OCI-LY7 (cell line): ENCODE measurements at regions of chr22 and their contacts with region 1.

Region 1: DNA sequence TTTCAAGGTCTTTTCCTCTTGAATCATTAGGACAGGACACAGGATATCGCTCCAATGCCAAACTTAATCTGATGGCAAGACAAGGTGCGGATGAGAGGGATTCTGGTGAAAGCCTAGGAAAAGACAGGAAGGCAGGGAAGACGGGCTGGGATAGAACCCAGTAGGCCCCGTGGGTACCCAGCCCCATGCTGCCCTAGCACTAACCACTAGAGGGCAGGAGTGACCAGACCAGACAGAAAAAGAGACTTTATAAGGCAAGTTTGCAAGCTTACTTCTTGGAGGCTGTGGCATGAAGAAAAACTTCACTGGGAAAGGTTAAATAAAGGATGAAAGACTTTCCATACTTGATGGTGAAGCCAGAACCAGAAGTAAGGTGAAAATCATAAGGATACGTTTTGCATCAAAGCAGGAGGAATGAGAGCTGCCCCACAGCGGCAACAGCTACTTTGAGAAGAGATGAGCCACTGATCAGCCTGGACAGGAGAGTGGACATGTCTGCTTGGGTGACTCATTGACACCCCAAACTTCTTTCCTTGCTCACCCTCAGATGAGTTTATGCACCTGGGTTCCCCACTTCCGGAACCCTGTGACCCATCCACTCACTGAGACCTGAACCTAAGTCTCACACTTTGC is 39.8 kb downstream of the SYN3 start:
- DNase-seq: peak; percentile 71
- H3K4me3 ChIP-seq: no peak overlapping the region
- H3K27ac ChIP-seq: no peak overlapping the region
- H3K4me1 ChIP-seq: peaks cover 18% of the 10 kb centered on the region
- CTCF ChIP-seq: peak; percentile 98

Region 2: GRCh38 chr22:32897400-32897799 is 120.9 kb before region 1 on chr22:
- CTCF ChIA-PET with region 1: no interaction called
- POLR2A ChIA-PET with region 1: no interaction called
- intact Hi-C with region 1: no loop called
- DNase-seq: no peak
- H3K4me3 ChIP-seq: no peak overlapping the region
- H3K27ac ChIP-seq: no peak overlapping the region
- H3K4me1 ChIP-seq: no peaks in the 10 kb centered on the region
- CTCF ChIP-seq: no peak

Region 3: DNA sequence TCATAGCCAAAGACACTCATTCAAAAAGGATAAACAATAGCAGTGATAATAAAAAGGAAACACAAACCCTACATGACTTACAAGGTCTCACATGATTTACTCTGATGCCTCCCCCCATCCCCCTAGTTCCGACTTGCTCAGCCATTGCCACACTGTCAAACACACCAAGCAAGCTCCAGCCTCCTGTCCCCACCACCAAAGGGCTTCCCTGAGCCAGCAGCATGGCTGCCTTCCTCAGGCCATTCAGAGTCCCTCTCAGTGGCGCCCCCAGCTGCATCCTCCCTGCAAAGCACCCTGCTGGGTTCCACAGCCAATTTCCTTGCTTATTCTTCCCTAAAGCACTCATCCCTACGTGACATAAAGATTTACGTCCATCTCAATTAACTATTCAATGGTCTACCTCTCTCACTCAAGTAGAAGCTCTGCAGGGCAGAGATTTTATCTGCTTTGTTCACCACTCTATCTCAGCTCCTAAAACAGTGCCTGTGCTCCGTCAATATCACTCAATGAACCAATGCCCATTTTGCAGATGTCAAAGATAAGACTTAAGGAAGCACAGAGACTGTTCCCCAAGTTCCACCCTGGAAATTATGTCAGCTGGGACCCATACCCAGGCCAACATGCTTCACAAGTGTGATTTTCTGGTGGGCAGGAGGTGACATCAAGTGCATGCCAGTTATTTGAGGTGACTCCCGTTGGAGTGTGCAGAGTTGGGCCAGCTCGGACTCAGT is 67.1 kb before region 1 on chr22:
- CTCF ChIA-PET with region 1: no interaction called
- POLR2A ChIA-PET with region 1: no interaction called
- intact Hi-C with region 1: no loop called
- DNase-seq: no peak
- H3K4me3 ChIP-seq: no peak overlapping the region
- H3K27ac ChIP-seq: no peak overlapping the region
- H3K4me1 ChIP-seq: no peaks in the 10 kb centered on the region
- CTCF ChIP-seq: 0 out of 2 replicates have a peak, but pooled peaks have one; percentile 26

Region 4: DNA sequence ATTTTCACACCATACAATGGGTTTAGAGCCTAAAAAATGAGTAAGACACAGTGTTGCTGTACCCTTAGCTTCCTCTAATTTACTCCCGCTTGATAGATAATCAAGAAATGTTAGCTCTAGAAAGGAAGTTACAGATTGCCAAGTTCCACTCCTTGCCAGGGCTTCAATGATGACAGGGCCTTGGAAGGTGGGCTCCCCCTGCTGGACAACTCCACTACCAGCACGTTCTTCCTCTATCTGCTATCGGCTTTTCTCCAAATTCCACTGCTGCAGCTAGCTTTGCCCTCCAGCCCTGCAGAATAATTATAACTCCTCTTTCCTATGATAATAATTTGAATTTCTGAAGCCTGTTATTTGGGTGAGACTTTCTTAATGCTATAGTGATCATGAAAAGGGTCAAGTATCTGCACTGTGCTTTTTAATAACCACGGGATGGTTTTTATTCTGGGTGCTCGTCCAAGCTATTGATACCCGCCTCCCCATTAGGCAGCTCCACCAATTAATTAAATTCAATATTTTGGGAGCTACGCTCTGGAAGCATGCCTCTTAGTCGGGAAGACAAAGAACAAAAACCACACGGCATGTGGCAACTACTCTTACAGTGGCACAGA is 30.9 kb after region 1 on chr22:
- CTCF ChIA-PET with region 1: interaction called, 11 read pairs
- POLR2A ChIA-PET with region 1: interaction called, 4 read pairs
- intact Hi-C with region 1: loop called (anchors 1 kb)
- DNase-seq: peak; percentile 86
- H3K4me3 ChIP-seq: no peak overlapping the region
- H3K27ac ChIP-seq: no peak overlapping the region
- H3K4me1 ChIP-seq: peaks cover 14% of the 10 kb centered on the region
- CTCF ChIP-seq: peak; percentile 95

Region 5: DNA sequence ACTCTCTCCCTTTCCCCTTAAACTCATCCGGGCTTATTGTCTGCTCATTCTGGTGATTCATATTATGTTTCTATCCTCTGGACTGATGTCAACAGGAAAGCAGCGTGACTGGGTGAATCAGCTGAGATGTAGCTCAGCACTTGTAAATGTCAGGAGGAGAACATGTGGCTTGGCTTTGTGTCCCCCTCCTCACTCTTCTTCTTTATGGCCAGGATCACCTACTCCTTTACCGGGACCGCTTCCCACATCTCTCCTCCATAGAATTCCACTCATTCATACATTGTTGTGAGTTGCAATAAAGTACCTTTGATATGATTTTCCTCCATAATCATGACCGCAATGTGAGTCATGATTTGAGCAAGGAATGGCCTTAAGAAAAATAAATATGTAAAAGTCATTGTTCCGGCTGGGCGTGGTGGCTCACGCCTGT is 55.7 kb after region 1 on chr22:
- CTCF ChIA-PET with region 1: no interaction called
- POLR2A ChIA-PET with region 1: no interaction called
- intact Hi-C with region 1: no loop called
- DNase-seq: no peak
- H3K4me3 ChIP-seq: no peak overlapping the region
- H3K27ac ChIP-seq: no peak overlapping the region
- H3K4me1 ChIP-seq: no peaks in the 10 kb centered on the region
- CTCF ChIP-seq: no peak

Region 6: DNA sequence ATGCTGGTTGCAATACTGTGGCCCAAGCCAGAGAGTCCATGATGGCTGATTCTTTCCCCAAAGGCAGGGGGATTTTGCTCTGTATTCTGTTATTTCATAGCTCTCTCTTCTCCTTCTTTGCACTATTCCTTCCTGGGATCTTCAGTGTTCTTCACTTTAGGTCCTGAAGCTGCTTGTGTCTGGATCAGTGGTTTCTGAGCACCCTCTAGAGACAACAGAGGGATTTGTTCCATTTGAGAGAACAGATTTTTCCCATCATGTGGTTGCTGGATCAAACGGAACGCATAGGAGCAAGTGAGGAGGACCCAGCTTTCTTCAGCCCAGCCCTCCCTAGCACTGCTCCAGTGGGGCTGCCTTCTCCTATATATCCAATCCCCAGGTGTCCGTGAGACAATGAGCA is 108.5 kb after region 1 on chr22:
- CTCF ChIA-PET with region 1: interaction called, 4 read pairs
- POLR2A ChIA-PET with region 1: no interaction called
- intact Hi-C with region 1: loop called (anchors 5 kb)
- DNase-seq: peak; percentile 24
- H3K4me3 ChIP-seq: no peak overlapping the region
- H3K27ac ChIP-seq: no peak overlapping the region
- H3K4me1 ChIP-seq: no peaks in the 10 kb centered on the region
- CTCF ChIP-seq: peak; percentile 68